ENCODE measurements at regions of chr7 and their contacts with region 1.

Region 1: DNA sequence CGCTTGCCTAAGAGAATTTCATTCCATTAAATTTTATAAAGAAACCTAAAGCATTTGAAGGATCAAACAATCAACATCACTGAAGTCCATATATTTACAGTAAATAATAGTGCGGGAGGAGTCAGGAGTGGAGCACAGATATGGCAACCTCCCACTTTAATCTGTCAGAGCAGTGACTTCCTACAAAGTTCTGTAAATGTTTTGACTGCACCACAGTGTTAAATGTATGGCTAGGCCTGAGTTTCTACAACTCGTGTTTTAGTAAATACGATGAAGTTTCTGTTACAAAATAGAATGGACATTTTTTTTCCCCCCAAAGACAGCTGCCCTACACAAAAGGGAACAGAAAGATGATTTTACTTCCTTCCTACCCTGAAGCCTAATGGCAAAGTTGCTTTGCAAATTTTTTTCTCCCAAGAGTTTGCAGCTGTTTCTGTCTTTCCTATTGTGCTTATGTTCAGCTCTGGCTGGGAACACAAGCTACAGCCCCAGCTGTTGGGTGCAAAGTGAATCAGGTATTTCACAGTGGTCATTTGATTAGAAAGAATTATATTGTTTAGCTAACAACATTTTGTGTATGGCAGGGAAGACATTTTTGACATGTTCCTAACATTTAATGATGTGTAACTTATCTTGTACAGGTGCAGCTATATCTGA is 62.1 kb downstream of the MET start:
- DNase-seq: no peak
- ATAC-seq: peak in 2 of 4 donors; percentile 38 to 48
- H3K4me3 ChIP-seq: no peak overlapping the region
- H3K27ac ChIP-seq: peak overlapping the region; percentile 47
- H3K4me1 ChIP-seq: peaks cover 50% of the 10 kb centered on the region
- H3K27me3 ChIP-seq: no peaks in the 10 kb centered on the region
- CTCF ChIP-seq: no peak

Region 2: DNA sequence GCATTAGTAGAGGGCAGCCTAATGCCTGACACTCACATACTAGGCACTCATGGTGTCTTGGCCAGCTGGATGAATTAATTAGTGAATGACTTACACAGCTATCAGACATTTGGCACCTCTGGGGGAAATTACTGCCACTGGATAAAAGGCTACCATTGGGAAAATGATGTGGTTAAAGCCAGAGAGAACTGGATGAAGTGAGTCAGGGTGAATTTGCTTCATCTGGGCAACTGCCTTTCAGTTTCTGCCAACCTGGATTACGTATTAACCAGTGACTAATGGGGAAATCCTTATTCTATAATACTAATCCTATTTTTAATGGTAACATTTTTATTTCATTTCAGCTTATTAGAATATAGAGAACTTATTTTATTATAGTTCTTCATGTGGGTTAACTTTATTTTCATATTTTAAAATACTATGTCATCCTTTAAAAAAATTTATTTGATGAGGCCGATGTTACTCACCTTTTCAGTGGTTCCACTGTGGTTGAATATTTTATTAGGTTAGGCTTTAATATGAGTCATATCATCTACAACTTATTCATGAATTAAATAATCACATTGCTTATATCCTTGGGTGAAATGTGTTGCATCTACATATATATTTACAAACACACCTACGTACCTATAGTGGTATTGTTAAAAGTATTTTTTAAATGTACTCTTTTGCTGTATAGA is 42.7 kb after region 1 on chr7:
- intact Hi-C with region 1: loop called in 1 of 2 experiments (anchors 5 kb)
- DNase-seq: no peak
- ATAC-seq: peak; percentile 77 to 93 (median 84)
- H3K4me3 ChIP-seq: no peak overlapping the region
- H3K27ac ChIP-seq: peak overlapping the region; percentile 66
- H3K4me1 ChIP-seq: peaks cover 51% of the 10 kb centered on the region
- H3K27me3 ChIP-seq: no peaks in the 10 kb centered on the region
- CTCF ChIP-seq: no peak

Region 3: DNA sequence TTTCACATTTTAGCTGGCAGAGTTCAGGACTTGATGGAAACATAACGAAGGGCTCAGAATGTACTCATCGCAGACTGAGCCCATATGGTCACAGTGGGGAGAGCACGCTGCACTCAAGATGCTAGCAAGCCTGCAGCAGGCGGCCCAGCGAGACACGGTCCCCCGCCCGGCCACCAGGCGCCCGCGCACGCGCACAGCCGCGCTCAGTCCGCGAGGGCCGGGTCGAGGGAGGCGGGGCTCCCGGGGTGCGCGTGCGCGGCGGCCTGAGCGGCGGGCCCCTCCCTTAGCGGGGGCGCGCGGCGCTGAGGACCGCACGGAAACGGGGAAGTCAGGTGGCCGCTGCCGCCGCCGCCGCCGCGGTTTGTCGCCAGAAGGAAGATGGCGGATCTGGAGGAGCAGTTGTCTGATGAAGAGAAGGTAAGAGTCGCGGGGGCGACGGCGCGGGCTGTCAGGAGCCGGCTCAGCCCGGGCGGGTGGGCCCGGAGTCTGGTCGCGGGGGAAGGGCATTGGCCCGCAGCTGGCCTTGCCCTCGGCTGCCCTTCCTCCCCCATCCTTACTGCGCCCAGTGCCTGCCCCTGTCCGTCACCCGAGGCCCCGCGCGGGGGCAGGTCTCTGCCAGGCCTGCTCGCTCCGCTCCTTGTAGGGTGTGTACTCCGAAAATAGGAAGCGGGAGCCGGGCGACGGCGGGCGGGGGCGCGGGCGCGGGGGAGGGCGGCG is 128.3 kb after region 1 on chr7 and contains the start of gene CAPZA2:
- intact Hi-C with region 1: no loop called
- DNase-seq: peak; percentile 96 to 97
- ATAC-seq: peak; percentile 95 to 97 (median 96)
- H3K4me3 ChIP-seq: peak within 1 kb of the TSS; percentile 94
- H3K27ac ChIP-seq: peak within 1 kb of the TSS; percentile 100
- H3K4me1 ChIP-seq: peaks cover 32% of the 10 kb centered on the region
- H3K27me3 ChIP-seq: no peaks in the 10 kb centered on the region
- CTCF ChIP-seq: peak; percentile 62
- total RNA-seq, gene CAPZA2: 152 to 271 (median 232) TPM

Region 4: DNA sequence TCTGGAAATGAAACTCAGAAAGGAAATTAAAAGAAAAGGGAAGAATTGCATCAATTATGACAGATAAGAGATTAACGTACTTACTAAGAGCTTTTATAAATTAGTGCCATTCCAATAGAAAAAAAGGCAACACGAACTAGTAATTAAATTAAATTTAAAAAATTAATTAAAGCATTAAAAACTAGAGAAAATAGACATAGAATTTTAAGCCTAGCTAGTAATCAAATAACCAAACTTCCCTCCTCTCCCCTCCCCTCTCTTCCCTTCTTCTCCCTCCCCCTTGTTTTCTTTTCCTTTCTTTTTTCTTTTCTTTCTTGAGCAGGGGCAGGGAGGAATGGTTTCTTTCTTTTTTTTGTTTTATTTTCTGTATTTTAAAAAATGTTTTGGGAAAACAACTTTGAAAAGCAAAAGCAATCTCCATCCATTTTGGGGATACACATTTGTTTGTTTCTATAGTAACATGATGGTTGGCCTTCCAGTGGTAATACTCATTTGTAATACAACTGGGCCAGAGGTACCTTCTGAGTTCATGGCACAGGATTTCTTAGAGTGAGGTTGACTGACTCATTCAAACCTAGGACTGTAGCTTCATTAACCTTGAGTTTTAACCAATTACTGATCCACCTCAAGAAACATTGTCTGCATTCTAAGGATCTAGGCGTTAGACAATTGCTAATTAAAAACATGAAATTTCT is 351.9 kb after region 1 on chr7:
- intact Hi-C with region 1: no loop called
- DNase-seq: no peak
- ATAC-seq: peak in 2 of 4 donors; percentile 35 to 40
- H3K4me3 ChIP-seq: no peak overlapping the region
- H3K27ac ChIP-seq: no peak overlapping the region
- H3K4me1 ChIP-seq: peaks cover 29% of the 10 kb centered on the region
- H3K27me3 ChIP-seq: no peaks in the 10 kb centered on the region
- CTCF ChIP-seq: no peak

Measured in psoas muscle (tissue), 8 donors.